ENCODE measurements at regions of chr5 and their contacts with region 1.

Region 1: DNA sequence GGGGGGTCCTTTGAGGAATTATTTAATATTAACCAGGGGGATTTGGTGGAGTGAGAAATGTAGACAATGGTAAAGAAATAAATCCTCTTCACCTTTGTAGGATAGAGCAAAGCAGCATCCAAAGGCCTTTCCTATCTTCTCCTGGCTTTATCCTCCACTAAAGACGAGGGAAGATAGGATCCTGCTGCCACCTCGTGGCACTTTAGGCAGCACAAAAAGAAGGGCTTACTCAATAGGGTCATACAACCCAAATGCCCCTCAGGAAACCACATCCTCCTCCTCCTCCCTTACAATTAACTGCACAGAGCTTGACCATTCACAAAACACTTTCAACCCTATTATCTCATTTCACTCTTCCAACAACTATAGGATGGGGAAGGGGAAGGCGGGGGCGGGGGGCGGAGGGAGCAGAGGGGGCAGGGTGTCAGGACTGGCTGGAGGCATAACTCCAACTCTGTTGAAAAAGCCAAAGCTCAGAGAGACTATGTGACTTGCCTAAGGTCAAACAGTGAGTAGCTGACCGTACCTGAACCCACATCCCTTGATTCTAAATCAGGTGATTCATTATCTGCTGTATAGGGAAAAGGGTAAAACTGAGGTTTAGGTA is 45.4 kb upstream of the MYOT start:
- DNase-seq: peak in 41 of 42 donors; percentile 15 to 84 (median 61)

Region 2: DNA sequence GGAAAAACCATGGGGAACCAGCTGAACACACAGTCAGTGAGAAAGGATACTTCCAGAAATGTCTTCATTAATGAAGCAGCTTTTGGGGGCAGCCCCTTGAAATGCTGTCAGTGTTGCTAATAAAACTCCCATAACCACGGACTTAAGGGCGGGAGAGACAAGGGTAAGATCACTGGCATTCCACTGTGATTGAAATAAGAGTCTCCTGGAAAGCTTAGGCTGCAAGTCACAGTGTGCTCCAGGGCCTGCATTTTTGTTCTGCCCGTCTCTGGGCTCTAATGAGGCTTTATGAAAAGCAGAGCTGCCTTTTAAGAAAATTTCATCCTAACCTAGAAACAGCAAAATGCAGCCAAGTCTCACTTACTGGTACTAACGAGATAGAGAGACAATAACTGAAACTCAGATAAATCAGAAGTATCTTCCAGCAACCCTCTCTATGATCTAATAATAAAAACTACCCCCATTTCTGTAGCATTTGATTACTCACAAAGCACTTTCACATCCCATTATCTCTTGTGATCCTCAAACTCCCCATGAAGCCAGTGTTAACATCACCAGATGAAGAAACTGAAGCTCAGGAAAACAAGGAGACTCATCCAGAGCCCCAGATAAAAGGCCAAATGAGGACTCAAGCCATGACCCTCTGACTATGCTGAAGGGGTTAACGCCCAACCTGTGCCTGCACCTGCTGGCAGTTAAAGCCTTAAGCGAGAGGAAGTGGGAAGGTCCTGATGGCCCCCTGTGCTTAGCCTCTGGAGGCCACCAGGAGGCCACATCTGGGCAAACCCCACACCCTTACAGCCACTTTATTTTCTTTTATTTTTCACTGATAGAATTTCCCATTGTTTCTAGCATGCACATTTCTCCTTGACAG is 360.6 kb before region 1 on chr5:
- intact Hi-C with region 1: no loop called
- DNase-seq: no peak

Region 3: GRCh38 chr5:137778772-137779564 is 43.3 kb before region 1 on chr5:
- intact Hi-C with region 1: loop called (anchors 1 kb)
- DNase-seq: peak in 6 of 42 donors; percentile 5 to 55 (median 28)